ENCODE measurements at regions of chr11 and their contacts with region 1.

Region 1: DNA sequence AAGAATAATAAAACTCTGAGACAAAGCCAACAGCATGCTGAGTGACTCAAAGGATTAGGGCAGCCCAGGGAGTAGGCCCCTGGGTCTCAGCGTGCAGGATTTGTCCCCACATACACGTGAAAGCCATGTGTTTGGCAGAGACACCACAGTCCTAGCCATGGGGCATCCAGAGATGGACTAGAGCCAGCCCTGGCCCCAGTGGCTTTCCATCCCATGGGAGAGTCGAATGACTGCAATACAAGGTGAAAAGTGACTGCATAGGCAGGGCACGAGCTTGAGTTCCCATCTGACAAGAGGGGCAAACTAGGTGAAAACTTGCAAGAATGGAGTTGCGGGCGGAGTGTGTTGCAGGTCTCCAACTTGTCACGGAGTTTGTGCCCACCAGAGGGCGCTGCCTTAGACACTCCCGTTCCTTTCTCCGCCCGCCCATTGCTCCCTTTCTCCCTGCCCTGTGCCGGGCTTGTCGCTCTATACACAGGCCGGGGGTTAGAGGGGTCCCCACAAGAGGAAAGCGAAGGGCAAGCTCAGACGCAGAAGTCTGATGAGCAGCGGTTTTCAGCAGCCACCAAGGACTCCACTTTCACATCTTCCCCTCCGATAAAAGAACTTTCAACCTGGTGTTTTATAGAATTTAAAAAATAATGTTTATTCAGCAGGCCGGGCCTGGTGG is 24.2 kb downstream of the TSKU start:
- DNase-seq: peak; percentile 84 to 91 (median 90)
- ATAC-seq: peak; percentile 73 to 90 (median 84)
- H3K4me3 ChIP-seq: peak overlapping the region in 3 of 12 donors; percentile 29 to 41 (median 33)
- H3K27ac ChIP-seq: peak overlapping the region in 2 of 12 donors; percentile 22 to 28
- H3K4me1 ChIP-seq: peaks cover 0 to 27% (median 7%) of the 10 kb centered on the region in 12 donors
- H3K27me3 ChIP-seq: no peaks in the 10 kb centered on the region
- CTCF ChIP-seq: peak; percentile 72 to 90 (median 80)
- POLR2A ChIP-seq: no peak

Region 2: GRCh38 chr11:76266270-76267090 is 540.9 kb before region 1 on chr11:
- intact Hi-C with region 1: no loop called
- DNase-seq: no peak
- ATAC-seq: peak in 2 of 4 donors; percentile 32 to 35
- H3K4me3 ChIP-seq: no peak overlapping the region
- H3K27ac ChIP-seq: peak overlapping the region in 4 of 12 donors; percentile 9 to 45 (median 42)
- H3K4me1 ChIP-seq: peaks cover 0 to 41% (median 6%) of the 10 kb centered on the region in 12 donors
- H3K27me3 ChIP-seq: no peaks in the 10 kb centered on the region
- CTCF ChIP-seq: no peak
- POLR2A ChIP-seq: no peak

Region 3: GRCh38 chr11:76637491-76638269 is 169.7 kb before region 1 on chr11:
- intact Hi-C with region 1: no loop called
- DNase-seq: peak; percentile 75 to 88 (median 80)
- ATAC-seq: peak; percentile 33 to 81 (median 66)
- H3K4me3 ChIP-seq: no peak overlapping the region
- H3K27ac ChIP-seq: peak overlapping the region; percentile 33 to 76 (median 58)
- H3K4me1 ChIP-seq: peaks cover 3 to 48% (median 25%) of the 10 kb centered on the region in 12 donors
- H3K27me3 ChIP-seq: no peaks in the 10 kb centered on the region
- CTCF ChIP-seq: no peak
- POLR2A ChIP-seq: no peak

Region 4: GRCh38 chr11:76664578-76665061 is 142.7 kb before region 1 on chr11:
- intact Hi-C with region 1: no loop called
- DNase-seq: peak in 3 of 5 donors; percentile 19 to 28 (median 24)
- ATAC-seq: peak in 1 of 4 donors; percentile 52
- H3K4me3 ChIP-seq: peak overlapping the region in 1 of 12 donors; percentile 21
- H3K27ac ChIP-seq: peak overlapping the region; percentile 44 to 93 (median 66)
- H3K4me1 ChIP-seq: peaks cover 0 to 54% (median 29%) of the 10 kb centered on the region in 12 donors
- H3K27me3 ChIP-seq: no peaks in the 10 kb centered on the region
- CTCF ChIP-seq: no peak
- POLR2A ChIP-seq: no peak

Region 5: DNA sequence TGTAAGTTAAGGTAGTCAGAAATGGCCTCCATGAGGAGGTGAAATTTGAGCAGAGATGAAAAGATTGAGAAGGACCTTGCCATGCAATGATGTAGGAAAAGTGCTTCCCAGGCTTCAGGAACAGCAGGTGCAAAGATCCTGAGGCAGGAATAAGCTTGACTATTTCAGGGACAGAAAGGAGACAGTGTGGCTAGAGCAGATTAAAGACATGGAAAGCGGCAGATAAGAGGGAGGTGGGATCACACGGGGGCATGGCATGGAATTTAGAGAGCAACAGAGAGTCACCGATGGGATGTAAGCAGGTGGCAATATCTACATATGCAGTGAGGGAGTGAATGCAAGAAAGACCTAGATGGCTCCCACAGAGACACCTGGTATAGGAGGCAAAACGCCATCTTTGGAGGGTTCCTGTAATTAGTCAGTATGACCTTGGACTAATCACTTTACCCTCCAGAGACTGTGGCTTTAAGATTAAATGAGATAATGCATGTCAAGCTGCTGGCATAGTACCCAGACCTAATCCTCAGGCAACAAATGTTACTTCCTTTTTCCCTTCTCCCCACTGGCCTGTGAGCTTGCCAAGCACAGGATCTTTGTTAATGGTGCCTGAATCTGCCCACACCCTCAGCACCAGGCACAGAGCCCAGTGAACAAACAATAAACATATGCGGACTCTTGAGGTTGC is 28.7 kb after region 1 on chr11:
- intact Hi-C with region 1: loop called in 3 of 10 experiments (anchors 1 to 2 kb)
- DNase-seq: peak in 4 of 5 donors; percentile 39 to 47 (median 42)
- ATAC-seq: peak in 3 of 4 donors; percentile 59 to 83 (median 80)
- H3K4me3 ChIP-seq: no peak overlapping the region
- H3K27ac ChIP-seq: peak overlapping the region in 9 of 12 donors; percentile 7 to 60 (median 50)
- H3K4me1 ChIP-seq: peaks cover 0 to 34% (median 16%) of the 10 kb centered on the region in 12 donors
- H3K27me3 ChIP-seq: no peaks in the 10 kb centered on the region
- CTCF ChIP-seq: no peak
- POLR2A ChIP-seq: no peak

Region 6: GRCh38 chr11:76850815-76851214 is 43.5 kb after region 1 on chr11:
- intact Hi-C with region 1: loop called in 1 of 10 experiments (anchors 10 kb)
- DNase-seq: peak in 3 of 5 donors; percentile 13 to 52 (median 51)
- ATAC-seq: peak; percentile 58 to 93 (median 93)
- H3K4me3 ChIP-seq: no peak overlapping the region
- H3K27ac ChIP-seq: no peak overlapping the region
- H3K4me1 ChIP-seq: peaks cover 0 to 20% (median 2%) of the 10 kb centered on the region in 12 donors
- H3K27me3 ChIP-seq: no peaks in the 10 kb centered on the region
- CTCF ChIP-seq: no peak
- POLR2A ChIP-seq: no peak

Region 7: GRCh38 chr11:76860539-76861475 is 53.5 kb after region 1 on chr11 and contains the start of gene ACER3:
- intact Hi-C with region 1: loop called in 4 of 10 experiments (anchors 5 to 10 kb)
- DNase-seq: peak; percentile 93 to 97 (median 94)
- ATAC-seq: peak; percentile 95 to 100 (median 98)
- H3K4me3 ChIP-seq: peak within 1 kb of the TSS; percentile 48 to 98 (median 80)
- H3K27ac ChIP-seq: peak within 1 kb of the TSS; percentile 54 to 93 (median 88)
- H3K4me1 ChIP-seq: peaks cover 0 to 70% (median 16%) of the 10 kb centered on the region in 12 donors
- H3K27me3 ChIP-seq: no peaks in the 10 kb centered on the region
- CTCF ChIP-seq: peak in 4 of 12 donors; percentile 5 to 18 (median 10)
- POLR2A ChIP-seq: peak; percentile 72 to 85
- total RNA-seq, gene ACER3: 4.8 to 17.0 (median 12.8) TPM

Region 8: GRCh38 chr11:77039491-77040400 is 232.4 kb after region 1 on chr11:
- intact Hi-C with region 1: loop called in 2 of 10 experiments (anchors 10 kb)
- DNase-seq: peak in 1 of 5 donors; percentile 31
- ATAC-seq: peak in 3 of 4 donors; percentile 24 to 65 (median 43)
- H3K4me3 ChIP-seq: peak overlapping the region; percentile 3 to 50 (median 39)
- H3K27ac ChIP-seq: no peak overlapping the region
- H3K4me1 ChIP-seq: peaks cover 0 to 12% (median 7%) of the 10 kb centered on the region in 12 donors
- H3K27me3 ChIP-seq: peaks cover 13 to 65% (median 33%) of the 10 kb centered on the region in 9 donors
- CTCF ChIP-seq: peak in 10 of 12 donors; percentile 13 to 48 (median 36)
- POLR2A ChIP-seq: no peak

Region 9: GRCh38 chr11:77091146-77091940 is 284.0 kb after region 1 on chr11:
- intact Hi-C with region 1: loop called in 3 of 10 experiments (anchors 5 kb)
- DNase-seq: peak; percentile 66 to 88 (median 73)
- ATAC-seq: peak; percentile 59 to 80 (median 76)
- H3K4me3 ChIP-seq: no peak overlapping the region
- H3K27ac ChIP-seq: no peak overlapping the region
- H3K4me1 ChIP-seq: peaks cover 0 to 1% (median 0%) of the 10 kb centered on the region in 12 donors
- H3K27me3 ChIP-seq: no peaks in the 10 kb centered on the region
- CTCF ChIP-seq: peak; percentile 83 to 95 (median 90)
- POLR2A ChIP-seq: no peak

Region 10: DNA sequence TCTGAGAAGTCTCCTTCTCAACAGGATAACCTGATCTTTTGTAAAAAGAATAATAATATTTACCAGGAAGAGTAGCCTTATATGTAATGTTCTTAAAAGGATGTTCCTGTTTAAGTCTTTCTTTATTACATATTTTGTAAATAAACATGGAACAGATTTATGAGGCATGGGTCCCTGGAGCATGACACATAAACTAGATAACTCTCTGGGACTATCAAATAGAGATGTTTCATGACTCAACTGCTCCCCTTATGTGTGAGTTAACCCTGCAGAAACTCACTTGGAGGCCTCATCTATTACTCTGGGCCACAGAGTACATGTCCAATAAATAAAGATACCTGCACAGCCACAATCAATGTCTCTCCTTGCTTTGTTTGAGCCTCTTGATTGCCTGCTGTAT is 429.6 kb after region 1 on chr11:
- intact Hi-C with region 1: no loop called
- DNase-seq: no peak
- ATAC-seq: no peak
- H3K4me3 ChIP-seq: no peak overlapping the region
- H3K27ac ChIP-seq: no peak overlapping the region
- H3K4me1 ChIP-seq: no peaks in the 10 kb centered on the region
- H3K27me3 ChIP-seq: peaks cover 0 to 6% (median 0%) of the 10 kb centered on the region in 9 donors
- CTCF ChIP-seq: no peak
- POLR2A ChIP-seq: no peak

Measured in heart left ventricle (tissue), 16 donors.